A549 (cell line): ENCODE measurements at regions of chr22 and their contacts with region 1.

Region 1: DNA sequence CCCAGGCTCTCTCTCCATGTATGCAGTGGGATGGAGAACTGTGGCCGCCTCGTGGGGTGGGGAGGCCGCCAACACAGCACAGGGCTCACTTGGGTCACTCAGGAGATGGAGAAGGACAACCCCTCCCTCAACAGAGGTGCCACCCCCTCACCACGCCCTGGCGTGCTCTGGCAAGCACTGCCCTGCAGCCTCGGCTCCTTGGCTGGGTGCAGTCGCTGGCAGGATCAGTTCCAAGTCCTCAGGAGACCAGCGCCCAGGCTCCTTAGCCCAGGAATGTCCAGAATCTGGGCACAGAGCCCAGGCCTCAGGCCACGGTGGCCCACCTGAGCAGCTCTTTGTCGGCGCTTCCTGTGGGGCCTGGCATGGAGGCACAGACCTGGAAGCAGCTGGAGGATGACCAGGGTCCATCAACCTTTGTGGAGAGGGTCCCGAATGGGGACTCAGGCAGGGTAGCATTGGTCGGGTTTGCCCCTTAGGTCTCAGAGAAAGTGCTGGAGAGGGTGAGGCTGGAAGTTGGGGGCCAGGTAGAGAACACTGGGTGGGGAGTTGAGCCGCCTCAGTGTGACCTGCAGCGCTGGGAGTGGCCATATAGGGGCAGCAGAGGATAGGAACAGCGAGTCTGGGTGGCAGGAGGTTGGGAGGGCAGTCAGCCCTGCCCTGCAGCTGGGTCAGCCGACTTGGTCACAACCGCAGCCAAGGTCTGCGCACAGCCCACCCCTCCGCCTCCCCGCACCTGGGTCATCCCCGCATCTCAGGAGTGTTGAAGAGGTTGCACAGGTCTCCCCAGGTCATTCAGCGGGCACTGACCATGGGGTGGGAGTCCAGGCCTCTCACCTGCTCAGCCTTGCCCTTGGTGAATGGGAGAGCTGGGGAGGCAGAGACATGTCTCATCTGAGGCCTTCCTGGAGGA is 8.2 kb downstream of the SUSD2 start:
- DNase-seq: peak; percentile 70 to 84
- ATAC-seq: peak; percentile 87 to 93
- H3K4me3 ChIP-seq: no peak overlapping the region
- H3K27ac ChIP-seq: peak overlapping the region; percentile 93 to 96
- H3K4me1 ChIP-seq: peaks cover 28% of the 10 kb centered on the region
- CTCF ChIP-seq: peak; percentile 80
- EP300 ChIP-seq: peak in 1 of 2 experiments; percentile 48; a peak in 1 of 5 replicates
- POLR2A ChIP-seq: no peak
- RAD21 ChIP-seq: peak; percentile 98

Region 2: GRCh38 chr22:24175160-24175808 is 14.2 kb before region 1 on chr22:
- CTCF ChIA-PET with region 1: interaction called, 32 read pairs
- POLR2A ChIA-PET with region 1: no interaction called
- DNase-seq: peak; percentile 53 to 71
- ATAC-seq: peak; percentile 81 to 91
- H3K4me3 ChIP-seq: no peak overlapping the region
- H3K27ac ChIP-seq: peak overlapping the region in 1 of 2 experiments; percentile 66; a peak in 3 of 6 replicates
- H3K4me1 ChIP-seq: 0 out of 3 replicates have a peak, but pooled peaks cover 2% of the 10 kb centered on the region
- CTCF ChIP-seq: peak; percentile 67
- EP300 ChIP-seq: no peak
- POLR2A ChIP-seq: no peak
- RAD21 ChIP-seq: peak; percentile 81

Region 3: GRCh38 chr22:24208012-24208749 is 18.7 kb after region 1 on chr22:
- CTCF ChIA-PET with region 1: interaction called, 52 read pairs
- POLR2A ChIA-PET with region 1: no interaction called
- DNase-seq: peak; percentile 85 to 96
- ATAC-seq: peak; percentile 92 to 98
- H3K4me3 ChIP-seq: no peak overlapping the region
- H3K27ac ChIP-seq: peak overlapping the region; percentile 97 to 100
- H3K4me1 ChIP-seq: peaks cover 58% of the 10 kb centered on the region
- CTCF ChIP-seq: no peak
- EP300 ChIP-seq: peak; percentile 96 to 100
- POLR2A ChIP-seq: no peak
- RAD21 ChIP-seq: peak; percentile 18 to 49; a peak in 3 of 5 replicates

Region 4: DNA sequence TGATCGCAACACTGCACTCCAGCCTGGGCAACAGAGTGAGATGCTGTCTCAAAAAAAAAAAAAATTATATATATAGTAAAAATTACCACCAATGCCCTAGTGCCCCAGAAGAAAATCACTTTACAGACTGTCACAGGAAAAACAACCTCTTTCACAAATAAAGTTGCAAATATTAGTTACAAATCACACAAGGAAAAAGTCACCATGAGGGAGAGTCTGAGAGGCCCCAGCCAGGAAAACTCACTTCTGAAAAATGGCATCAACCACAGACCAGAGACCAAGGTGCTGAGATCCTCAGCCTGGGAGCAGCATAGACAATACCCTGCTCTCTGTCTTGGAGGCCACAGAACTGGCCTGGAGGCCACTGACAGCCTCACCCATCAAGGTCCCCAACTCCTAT is 35.0 kb after region 1 on chr22:
- CTCF ChIA-PET with region 1: interaction called, 27 read pairs
- POLR2A ChIA-PET with region 1: no interaction called
- DNase-seq: no peak
- ATAC-seq: no peak
- H3K4me3 ChIP-seq: no peak overlapping the region
- H3K27ac ChIP-seq: no peak overlapping the region; a peak in 1 of 6 replicates
- H3K4me1 ChIP-seq: no peaks in the 10 kb centered on the region
- CTCF ChIP-seq: no peak
- EP300 ChIP-seq: no peak
- POLR2A ChIP-seq: no peak
- RAD21 ChIP-seq: no peak

Region 5: GRCh38 chr22:24244101-24244787 is 54.7 kb after region 1 on chr22:
- CTCF ChIA-PET with region 1: interaction called, 61 read pairs
- POLR2A ChIA-PET with region 1: interaction called, 6 read pairs
- DNase-seq: no peak
- ATAC-seq: no peak
- H3K4me3 ChIP-seq: no peak overlapping the region
- H3K27ac ChIP-seq: peak overlapping the region; percentile 82 to 100; a peak in 5 of 6 replicates
- H3K4me1 ChIP-seq: peaks cover 48% of the 10 kb centered on the region
- CTCF ChIP-seq: no peak
- EP300 ChIP-seq: no peak
- POLR2A ChIP-seq: no peak
- RAD21 ChIP-seq: no peak